ENCODE measurements at regions of chr3 and their contacts with region 1.

Region 1: DNA sequence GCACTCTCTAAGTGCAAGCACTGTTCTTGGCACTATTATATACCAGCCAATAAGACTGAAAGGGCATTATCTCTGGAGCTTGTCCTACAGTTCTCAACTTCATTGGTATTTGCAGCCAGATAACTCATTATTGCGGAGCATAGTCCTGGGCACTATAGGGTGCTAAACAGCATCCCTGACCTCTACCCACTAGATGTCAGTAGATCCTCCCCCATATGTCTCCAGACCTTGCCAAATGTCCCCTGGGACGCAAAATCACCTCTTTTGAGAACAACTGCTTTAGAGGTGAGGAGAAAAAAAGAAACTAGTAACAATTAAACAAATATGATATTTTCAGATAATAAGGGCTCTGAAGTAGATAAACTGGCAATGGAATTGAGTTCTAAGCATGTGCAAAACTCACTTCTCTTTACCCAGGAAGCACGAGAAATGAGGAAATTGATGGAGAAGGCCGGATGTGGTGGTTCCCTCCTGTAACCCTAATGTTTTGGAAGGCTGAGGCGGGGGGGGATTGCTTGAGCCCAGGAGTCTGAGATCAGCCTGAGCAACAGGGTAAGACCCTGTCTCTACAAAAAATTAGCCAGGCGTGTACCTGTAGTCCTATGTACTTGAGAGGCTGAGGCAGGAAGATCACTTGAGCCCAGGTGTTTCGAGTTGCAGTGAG is 61.4 kb downstream of the FRMD4B start:
- DNase-seq: no peak
- H3K4me3 Mint-ChIP-seq: no peak overlapping the region
- H3K27ac Mint-ChIP-seq: peak overlapping the region; percentile 85
- H3K4me1 Mint-ChIP-seq: peaks cover 56% of the 10 kb centered on the region
- H3K27me3 Mint-ChIP-seq: peaks cover 1% of the 10 kb centered on the region

Region 2: GRCh38 chr3:69084326-69085167 is 239.9 kb before region 1 on chr3 and contains the start of gene ARL6IP5:
- intact Hi-C with region 1: loop called (anchors 2 kb)
- DNase-seq: peak; percentile 89
- H3K4me3 Mint-ChIP-seq: peak within 1 kb of the TSS; percentile 98
- H3K27ac Mint-ChIP-seq: peak within 1 kb of the TSS; percentile 94
- H3K4me1 Mint-ChIP-seq: peaks cover 61% of the 10 kb centered on the region
- H3K27me3 Mint-ChIP-seq: no peaks in the 10 kb centered on the region
- total RNA-seq, gene ARL6IP5: 147 and 156 TPM in 2 replicates

Region 3: DNA sequence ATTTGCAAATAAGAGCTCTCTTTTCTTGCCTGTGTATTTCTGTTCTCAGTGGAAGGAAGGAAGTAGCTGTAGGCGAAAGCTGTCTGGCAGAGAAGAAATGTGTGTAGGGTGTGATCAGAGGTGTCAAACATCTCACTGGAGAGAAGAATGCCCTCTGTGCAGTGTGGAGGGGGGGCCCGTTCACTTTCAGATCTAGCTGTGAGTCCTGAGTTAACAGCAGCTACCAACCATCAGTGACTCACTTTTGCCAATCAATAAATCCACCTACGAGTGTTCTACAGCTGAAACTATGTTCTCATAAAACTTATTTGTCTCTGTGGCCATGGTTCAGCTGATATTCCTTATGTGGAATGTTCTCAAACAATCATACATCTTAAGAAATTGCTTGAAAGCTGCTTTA is 42.3 kb before region 1 on chr3:
- intact Hi-C with region 1: loop called (anchors 1 kb)
- DNase-seq: peak; percentile 12
- H3K4me3 Mint-ChIP-seq: peak overlapping the region; percentile 19
- H3K27ac Mint-ChIP-seq: peak overlapping the region; percentile 84
- H3K4me1 Mint-ChIP-seq: peaks cover 45% of the 10 kb centered on the region
- H3K27me3 Mint-ChIP-seq: no peaks in the 10 kb centered on the region

Region 4: DNA sequence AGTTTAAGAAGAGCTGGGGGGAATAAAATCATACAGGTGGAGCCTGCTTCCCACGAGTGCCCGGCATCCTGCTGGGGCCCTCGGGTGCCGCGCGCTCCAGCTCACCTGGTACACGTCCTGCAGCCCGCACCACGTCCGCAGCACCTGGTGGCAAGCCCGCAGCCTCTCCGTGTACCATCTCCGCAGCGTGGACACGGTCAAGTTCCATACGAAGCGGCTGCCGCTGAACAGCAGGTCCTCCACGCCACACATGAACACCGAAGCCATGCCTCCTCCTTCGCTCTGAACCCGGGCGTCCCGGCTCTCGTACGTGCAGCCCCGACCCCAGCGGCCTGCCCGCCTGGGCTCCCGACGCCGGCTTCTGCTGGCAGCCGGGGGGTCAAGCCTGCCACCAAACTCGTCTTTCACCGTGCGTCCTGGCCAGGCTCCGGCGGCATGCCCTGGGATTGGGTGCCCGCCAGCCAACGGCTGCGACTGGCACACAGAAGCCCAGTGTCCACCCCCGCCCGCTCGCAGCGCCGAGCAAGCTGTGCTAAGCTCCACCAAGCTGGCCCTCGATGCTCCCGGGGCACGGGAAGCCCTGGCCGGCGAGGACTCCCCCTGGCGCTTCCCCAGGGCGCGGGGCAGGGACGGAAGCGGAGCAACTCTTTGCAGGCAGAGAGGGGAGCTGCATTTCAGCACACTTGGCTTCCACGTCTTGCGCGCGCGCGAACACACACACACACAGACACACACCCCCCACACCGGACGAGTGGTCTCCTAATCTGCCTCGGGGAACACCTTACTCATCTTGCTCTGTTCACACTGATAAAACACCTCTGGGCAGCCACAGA is 61.4 kb after region 1 on chr3 and contains the start of gene FRMD4B:
- intact Hi-C with region 1: loop called (anchors 1 kb)
- DNase-seq: peak; percentile 21
- H3K4me3 Mint-ChIP-seq: peak within 1 kb of the TSS; percentile 75
- H3K27ac Mint-ChIP-seq: peak within 1 kb of the TSS; percentile 13
- H3K4me1 Mint-ChIP-seq: peaks cover 6% of the 10 kb centered on the region
- H3K27me3 Mint-ChIP-seq: peaks cover 68% of the 10 kb centered on the region
- total RNA-seq, gene FRMD4B: 83.3 and 83.6 TPM in 2 replicates

Region 5: GRCh38 chr3:69439643-69440270 is 115.3 kb after region 1 on chr3:
- intact Hi-C with region 1: loop called (anchors 1 kb)
- DNase-seq: no peak
- H3K4me3 Mint-ChIP-seq: no peak overlapping the region
- H3K27ac Mint-ChIP-seq: no peak overlapping the region
- H3K4me1 Mint-ChIP-seq: peaks cover 78% of the 10 kb centered on the region
- H3K27me3 Mint-ChIP-seq: no peaks in the 10 kb centered on the region

Region 6: DNA sequence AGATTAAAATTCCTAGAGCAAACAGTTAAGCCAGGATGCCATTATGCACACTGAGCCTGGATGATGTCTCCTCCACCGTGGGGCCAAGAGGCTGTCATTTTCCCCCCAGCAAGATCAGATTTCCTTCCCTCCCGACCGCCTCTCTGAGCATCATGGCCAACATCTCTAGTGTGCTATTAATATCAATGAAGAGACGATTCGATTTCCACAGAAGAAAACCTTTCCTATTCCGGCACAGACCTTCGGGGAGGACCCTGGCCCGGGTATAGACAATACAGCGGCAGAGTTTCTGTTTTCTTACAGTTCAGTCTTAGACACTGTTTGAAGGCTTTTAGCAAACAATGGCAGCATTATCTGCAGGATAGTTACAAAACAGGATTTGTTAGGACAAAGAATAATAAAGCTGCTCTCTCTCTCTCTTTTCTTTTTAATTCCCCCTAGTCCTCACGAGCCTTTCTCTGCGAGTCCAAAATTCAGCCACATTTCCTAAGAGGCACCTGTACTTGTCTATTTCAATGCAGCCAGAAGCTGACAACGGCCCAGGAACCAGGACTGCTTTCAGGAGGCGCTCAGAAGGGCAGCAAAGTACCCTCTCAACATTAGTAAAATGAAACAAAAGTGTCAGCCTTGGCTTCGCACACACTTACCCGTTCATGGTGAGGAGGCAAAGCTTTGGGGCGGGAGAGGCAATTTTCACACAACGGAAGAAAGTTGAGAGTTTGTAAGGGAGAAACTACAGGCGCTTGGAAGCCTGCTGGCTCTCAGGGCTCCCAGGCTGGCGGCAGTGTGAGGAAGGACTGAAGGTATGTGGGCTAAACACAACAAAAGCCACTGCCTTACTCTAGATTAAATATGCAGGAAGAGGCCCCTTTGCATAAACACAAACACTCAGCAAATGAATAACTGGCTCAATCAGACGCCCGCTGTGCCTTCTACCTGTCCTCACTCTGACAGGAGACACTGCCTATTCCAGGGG is 1981.0 kb after region 1 on chr3:
- intact Hi-C with region 1: loop called (anchors 2 kb)
- DNase-seq: no peak
- H3K4me3 Mint-ChIP-seq: peak overlapping the region; percentile 87
- H3K27ac Mint-ChIP-seq: peak overlapping the region; percentile 63
- H3K4me1 Mint-ChIP-seq: peaks cover 79% of the 10 kb centered on the region
- H3K27me3 Mint-ChIP-seq: peaks cover 53% of the 10 kb centered on the region